Esophagus muscularis mucosa (tissue), 4 donors: ENCODE measurements at regions of chr14 and their contacts with region 1.

Region 1: GRCh38 chr14:81453166-81453766 is 53.1 kb upstream of the STON2 start:
- DNase-seq: no peak
- H3K4me3 ChIP-seq: no peak overlapping the region
- H3K27ac ChIP-seq: no peak overlapping the region
- H3K4me1 ChIP-seq: peaks cover 12 to 20% (median 17%) of the 10 kb centered on the region in 4 donors
- H3K27me3 ChIP-seq: peaks cover 0 to 40% (median 3%) of the 10 kb centered on the region in 4 donors
- CTCF ChIP-seq: peak; percentile 81 to 94 (median 83)
- EP300 ChIP-seq: no peak
- POLR2A ChIP-seq: no peak

Region 2: GRCh38 chr14:81269979-81270375 is 183.3 kb before region 1 on chr14:
- intact Hi-C with region 1: loop called (anchors 2 kb)
- DNase-seq: no peak
- H3K4me3 ChIP-seq: no peak overlapping the region
- H3K27ac ChIP-seq: no peak overlapping the region
- H3K4me1 ChIP-seq: peaks cover 0 to 6% (median 2%) of the 10 kb centered on the region in 4 donors
- H3K27me3 ChIP-seq: peaks cover 0 to 4% (median 0%) of the 10 kb centered on the region in 4 donors
- CTCF ChIP-seq: no peak
- EP300 ChIP-seq: no peak
- POLR2A ChIP-seq: no peak

Region 3: DNA sequence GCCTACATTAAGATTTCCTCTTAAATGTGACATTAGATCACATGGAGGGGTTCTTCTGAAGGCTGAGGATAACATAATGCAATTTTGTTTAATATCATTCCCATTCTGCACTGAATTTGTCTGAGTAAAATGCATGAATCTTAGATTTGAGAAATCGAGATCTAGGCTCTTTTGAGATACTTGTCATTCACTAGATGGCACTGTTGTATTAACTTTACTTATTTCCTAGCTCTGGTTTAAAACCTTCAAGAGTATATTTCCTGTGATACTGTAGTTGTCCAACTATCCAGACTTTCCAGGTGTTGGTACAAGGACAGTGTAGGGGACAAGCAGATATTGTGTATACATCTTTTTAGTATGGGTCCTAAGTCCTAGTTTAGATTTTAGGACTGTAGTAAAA is 172.1 kb after region 1 on chr14:
- intact Hi-C with region 1: no loop called
- DNase-seq: no peak
- H3K4me3 ChIP-seq: no peak overlapping the region
- H3K27ac ChIP-seq: no peak overlapping the region
- H3K4me1 ChIP-seq: no peaks in the 10 kb centered on the region
- H3K27me3 ChIP-seq: peaks cover 0 to 8% (median 0%) of the 10 kb centered on the region in 4 donors
- CTCF ChIP-seq: peak; percentile 24 to 42 (median 33)
- EP300 ChIP-seq: no peak
- POLR2A ChIP-seq: no peak

Region 4: DNA sequence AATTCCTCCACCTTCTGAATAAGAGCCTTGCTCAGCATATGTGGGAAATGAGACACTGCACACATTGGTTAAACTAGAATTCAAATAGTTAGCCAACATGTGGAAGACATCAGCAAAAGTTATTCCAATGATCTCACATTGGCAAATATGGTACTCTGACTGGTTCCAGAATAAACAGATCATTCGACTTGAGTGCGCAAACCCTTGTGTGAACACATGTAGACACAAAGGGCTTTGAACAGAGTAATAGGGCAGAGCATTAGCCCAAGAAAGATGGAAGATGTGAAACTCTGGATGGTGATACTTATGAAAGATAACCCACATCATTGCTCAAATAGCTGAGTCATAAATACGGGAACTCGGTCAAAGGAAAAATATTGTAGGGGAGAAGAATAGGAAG is 1213.7 kb after region 1 on chr14:
- intact Hi-C with region 1: no loop called
- DNase-seq: no peak
- H3K4me3 ChIP-seq: no peak overlapping the region
- H3K27ac ChIP-seq: peak overlapping the region in 2 of 4 donors; percentile 8 to 36
- H3K4me1 ChIP-seq: no peaks in the 10 kb centered on the region
- H3K27me3 ChIP-seq: no peaks in the 10 kb centered on the region
- CTCF ChIP-seq: no peak
- EP300 ChIP-seq: no peak
- POLR2A ChIP-seq: no peak